ENCODE measurements at regions of chr4 and their contacts with region 1.

Region 1: GRCh38 chr4:169659716-169660670 is 39.6 kb downstream of the CLCN3 start:
- DNase-seq: peak; percentile 84
- H3K4me3 ChIP-seq: peak overlapping the region; percentile 67
- H3K27ac ChIP-seq: peak overlapping the region; percentile 75
- H3K4me1 ChIP-seq: peaks cover 24% of the 10 kb centered on the region
- CTCF ChIP-seq: no peak

Region 2: DNA sequence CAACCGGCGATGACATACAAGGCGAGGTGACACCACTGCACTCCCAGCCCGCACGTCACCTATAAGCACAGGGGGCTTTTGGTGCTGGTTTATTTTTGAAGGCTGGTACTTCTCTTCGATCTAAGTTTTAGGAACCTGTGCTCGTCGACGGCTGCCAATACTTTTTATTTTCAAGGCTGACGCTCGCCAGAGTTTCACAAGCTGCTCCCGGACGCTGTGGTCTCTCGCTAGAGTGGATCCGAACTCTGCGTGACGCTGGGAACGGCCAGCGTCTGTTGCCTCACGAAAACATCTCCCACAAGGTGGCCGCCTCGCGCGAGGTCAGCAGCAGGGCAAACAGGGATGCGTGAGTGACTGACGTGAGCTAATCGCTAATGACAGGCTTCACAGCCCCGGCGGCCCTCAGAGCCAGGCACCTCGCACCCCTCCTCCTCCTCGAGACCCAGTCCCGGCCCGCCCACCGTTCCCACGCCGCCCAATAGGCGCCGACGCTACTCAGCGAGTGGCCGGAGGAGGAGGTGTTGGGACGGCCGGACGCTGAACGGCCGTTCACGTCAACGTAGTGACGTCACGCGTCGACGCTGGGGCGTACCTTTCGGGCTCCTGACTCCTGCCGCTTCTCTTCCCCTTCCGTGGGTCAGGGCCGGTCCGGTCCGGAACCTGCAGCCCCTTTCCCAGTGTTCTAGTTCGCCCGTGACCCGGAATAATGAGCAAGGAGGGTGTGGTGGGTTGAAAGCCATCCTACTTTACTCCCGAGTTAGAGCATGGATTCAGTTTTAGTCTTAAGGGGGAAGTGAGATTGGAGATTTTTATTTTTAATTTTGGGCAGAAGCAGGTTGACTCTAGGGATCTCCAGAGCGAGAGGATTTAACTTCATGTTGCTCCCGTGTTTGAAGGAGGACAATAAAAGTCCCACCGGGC is 39.8 kb before region 1 on chr4 and contains the start of gene CLCN3:
- CTCF ChIA-PET with region 1: no interaction called
- POLR2A ChIA-PET with region 1: interaction called, 4 read pairs
- intact Hi-C with region 1: loop called (anchors 2 kb)
- DNase-seq: peak; percentile 98
- H3K4me3 ChIP-seq: peak within 1 kb of the TSS; percentile 75
- H3K27ac ChIP-seq: peak within 1 kb of the TSS; percentile 93
- H3K4me1 ChIP-seq: peaks cover 34% of the 10 kb centered on the region
- CTCF ChIP-seq: no peak
- total RNA-seq, gene CLCN3: 17.8 and 23.0 TPM in 2 replicates

Region 3: GRCh38 chr4:169640261-169640870 is 19.6 kb before region 1 on chr4:
- CTCF ChIA-PET with region 1: no interaction called
- POLR2A ChIA-PET with region 1: interaction called, 17 read pairs
- intact Hi-C with region 1: no loop called
- DNase-seq: no peak
- H3K4me3 ChIP-seq: no peak overlapping the region
- H3K27ac ChIP-seq: no peak overlapping the region
- H3K4me1 ChIP-seq: no peaks in the 10 kb centered on the region
- CTCF ChIP-seq: no peak

Region 4: GRCh38 chr4:169649545-169650226 is 10.3 kb before region 1 on chr4:
- CTCF ChIA-PET with region 1: no interaction called
- POLR2A ChIA-PET with region 1: interaction called, 18 read pairs
- intact Hi-C with region 1: no loop called
- DNase-seq: no peak
- H3K4me3 ChIP-seq: no peak overlapping the region
- H3K27ac ChIP-seq: no peak overlapping the region
- H3K4me1 ChIP-seq: peaks cover 9% of the 10 kb centered on the region
- CTCF ChIP-seq: no peak

Measured in OCI-LY7 (cell line).